HEK293T (cell line): ENCODE measurements at regions of chr11 and their contacts with region 1.

Region 1: DNA sequence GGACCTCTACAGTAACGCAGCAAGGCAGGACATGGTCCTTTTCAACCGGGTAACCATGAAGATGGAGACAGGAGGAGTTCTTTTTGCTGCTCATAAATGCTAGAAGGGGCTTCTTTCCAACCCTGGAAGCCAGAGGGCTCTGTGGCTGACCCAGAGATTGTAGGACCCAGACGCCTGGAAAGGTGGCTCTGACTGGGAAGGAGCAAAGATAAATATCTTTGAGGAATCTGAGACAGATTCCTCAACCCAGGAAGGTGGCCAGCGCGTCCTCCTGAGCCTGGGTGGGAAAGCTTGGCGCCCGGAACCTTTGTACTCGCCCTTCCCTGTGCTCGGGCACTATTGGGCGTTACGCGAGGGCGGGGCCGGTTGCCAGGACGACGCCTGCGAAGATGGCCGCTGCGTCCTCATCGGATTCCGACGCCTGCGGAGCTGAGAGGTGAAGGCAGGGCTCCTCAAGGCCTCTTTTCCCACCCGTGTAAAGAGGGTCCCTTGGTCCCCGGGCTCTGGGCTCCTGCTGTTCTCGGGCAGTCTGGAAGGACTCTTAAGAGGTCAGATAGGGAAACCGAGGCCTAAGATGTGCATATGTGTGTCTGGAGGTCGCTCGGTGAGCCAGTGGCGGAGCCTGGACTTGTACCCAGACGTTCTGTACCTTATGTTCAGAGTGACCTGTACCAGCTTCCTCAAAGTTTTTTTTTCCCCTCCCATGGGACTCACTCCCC is at the start of gene BBS1:
- DNase-seq: peak; percentile 91

Region 2: DNA sequence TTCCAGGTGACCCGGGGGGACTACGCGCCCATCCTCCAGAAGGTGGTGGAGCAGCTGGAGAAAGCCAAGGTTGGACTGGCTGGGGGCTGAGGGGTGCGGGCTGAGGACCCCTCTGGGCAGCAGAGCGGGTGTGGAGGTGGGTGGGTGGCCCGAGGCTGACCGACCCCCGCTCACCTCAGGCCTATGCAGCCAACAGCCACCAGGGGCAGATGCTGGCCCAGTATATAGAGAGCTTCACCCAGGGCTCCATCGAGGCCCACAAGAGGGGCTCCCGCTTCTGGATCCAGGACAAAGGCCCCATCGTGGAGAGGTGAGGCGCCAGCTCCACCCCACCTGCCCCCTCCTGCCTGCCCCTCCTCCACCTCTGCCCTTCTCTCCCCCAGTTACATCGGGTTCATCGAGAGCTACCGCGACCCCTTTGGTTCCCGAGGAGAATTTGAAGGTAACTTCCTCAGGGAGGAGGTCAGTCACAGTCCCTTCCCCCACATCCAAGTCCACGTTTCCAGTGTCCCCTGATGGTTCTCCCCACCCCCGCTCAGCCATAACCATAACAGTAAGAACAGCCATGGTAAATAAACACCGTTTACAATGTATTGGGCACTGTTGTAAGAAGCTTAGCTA is 19.0 kb before region 1 on chr11:
- CTCF ChIA-PET with region 1: interaction called, 15 read pairs
- POLR2A ChIA-PET with region 1: no interaction called
- DNase-seq: peak; percentile 58

Region 3: DNA sequence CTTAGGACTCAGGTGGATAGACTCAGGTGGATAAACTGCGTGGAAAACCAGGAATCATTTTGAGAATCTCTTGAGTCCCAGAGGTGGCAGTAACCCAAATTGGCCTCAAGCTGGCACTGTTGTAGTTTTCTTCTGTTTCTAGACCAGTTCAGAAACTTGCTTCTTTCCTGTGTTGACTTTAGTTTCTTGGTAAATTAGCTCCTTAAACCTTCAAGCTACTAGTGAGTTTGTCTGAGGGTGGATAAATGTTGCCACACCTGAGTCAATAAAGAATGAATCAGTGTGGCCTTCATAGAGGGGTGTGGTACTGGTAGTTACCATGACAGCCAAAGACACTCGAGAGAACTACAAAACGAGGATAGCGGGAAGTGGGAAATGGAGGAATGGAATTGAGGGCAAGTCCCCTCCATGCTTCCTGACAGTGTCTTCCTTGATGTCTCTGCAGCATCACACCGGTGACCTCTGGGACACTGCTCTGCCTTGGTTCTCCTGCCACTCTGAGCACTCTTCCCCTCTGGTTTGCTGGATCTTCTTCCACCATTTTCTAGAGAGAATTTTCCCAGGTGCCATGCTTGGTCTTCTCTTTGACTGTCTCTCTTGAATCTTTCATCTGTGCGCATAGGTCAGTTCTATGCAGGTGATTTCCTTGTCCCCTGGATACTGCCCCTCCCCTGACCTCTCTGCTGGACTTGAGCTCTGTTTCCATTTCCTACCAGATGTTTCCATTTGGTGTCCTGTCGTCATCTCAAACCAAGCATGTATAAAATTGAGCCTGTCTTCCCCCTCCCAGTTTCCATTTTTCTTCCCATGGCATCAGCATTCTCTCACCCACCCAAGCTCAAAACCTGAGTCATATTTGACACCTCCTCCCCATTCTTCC is 835.7 kb after region 1 on chr11:
- CTCF ChIA-PET with region 1: no interaction called
- POLR2A ChIA-PET with region 1: no interaction called
- DNase-seq: no peak